PC-3 (cell line): ENCODE measurements at regions of chr6 and their contacts with region 1.

Region 1: DNA sequence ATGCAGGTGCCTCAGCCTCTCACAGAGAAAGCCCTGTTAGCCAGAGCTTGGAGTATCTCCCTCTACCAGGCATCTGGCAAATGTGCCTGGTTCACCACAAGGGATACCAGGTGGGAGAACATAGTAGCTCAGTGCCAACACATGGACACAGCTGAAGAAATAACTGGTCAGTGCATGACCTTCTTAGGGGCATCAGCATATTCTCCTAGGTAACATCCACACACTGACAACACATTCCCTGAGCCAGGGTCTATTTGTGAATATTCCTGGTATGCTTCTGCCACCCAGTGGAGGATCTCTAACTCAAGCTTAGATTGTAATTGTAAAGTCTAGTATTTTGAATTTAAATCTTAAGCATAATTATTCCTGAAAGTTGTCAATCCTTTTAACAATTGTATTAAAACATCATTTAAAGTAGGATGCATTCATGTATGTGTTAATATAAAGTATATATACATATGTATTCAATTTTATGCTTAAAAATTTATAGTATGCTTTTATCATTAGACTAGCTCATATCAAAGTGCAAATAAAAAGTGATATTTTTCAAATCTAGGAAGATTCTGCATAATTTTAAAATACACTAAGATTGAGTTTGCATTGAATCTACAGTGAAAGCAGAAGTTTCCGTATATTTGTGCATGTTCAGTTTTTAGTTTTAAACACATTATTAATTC is 45.3 kb upstream of the COL21A1 start:
- DNase-seq: peak; percentile 79
- ATAC-seq: peak; percentile 82
- H3K4me3 ChIP-seq: no peak overlapping the region
- H3K27ac ChIP-seq: no peak overlapping the region
- H3K4me1 ChIP-seq: peaks cover 9% of the 10 kb centered on the region
- H3K27me3 ChIP-seq: no peaks in the 10 kb centered on the region
- CTCF ChIP-seq: peak; percentile 87

Region 2: DNA sequence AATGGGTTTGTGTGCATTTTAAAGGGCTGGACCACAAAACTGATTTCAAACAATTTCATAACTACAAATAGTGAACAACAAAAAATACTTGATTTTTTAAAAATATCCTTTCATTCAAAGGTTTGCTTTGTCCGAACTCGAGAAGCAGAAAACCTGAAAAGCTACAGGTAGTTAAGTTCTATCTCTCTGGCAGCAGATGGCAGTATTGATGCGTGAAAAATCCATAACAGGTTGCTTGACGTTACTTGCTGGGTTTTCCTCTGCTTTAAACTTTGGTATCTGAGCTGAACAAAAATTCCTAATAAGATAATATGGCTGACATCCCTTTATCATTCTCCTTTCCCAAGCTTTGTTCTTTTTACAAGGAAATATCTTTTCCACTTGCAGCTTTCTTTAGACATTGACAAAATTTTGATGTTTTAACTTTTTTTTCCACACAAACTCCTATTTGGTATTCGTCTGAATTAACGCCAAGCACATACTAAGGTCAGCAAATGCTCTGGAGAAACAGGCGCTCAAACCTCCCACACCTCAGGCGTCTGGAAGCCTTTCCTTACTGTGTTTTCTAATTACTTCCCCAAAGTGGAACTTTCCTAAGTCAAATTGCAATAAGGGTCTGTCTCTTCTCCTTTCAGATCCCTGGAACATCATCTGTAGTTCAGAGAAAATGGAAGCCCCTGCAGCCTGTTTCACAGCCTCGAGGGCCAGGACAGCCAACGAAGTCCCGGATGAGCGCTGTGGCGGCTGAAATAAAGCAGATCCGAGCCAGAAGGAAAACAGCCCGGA is 1015.7 kb before region 1 on chr6:
- CTCF ChIA-PET with region 1: interaction called, 3 read pairs
- POLR2A ChIA-PET with region 1: no interaction called
- intact Hi-C with region 1: loop called (anchors 5 kb)
- DNase-seq: peak; percentile 73
- ATAC-seq: peak; percentile 46; the same call in 1 of the 2 replicates
- H3K4me3 ChIP-seq: no peak overlapping the region
- H3K27ac ChIP-seq: no peak overlapping the region
- H3K4me1 ChIP-seq: no peaks in the 10 kb centered on the region
- H3K27me3 ChIP-seq: peaks cover 58% of the 10 kb centered on the region
- CTCF ChIP-seq: peak; percentile 79

Region 3: GRCh38 chr6:55833284-55833683 is 459.4 kb before region 1 on chr6:
- CTCF ChIA-PET with region 1: no interaction called
- POLR2A ChIA-PET with region 1: no interaction called
- intact Hi-C with region 1: no loop called
- DNase-seq: no peak
- ATAC-seq: no peak
- H3K4me3 ChIP-seq: no peak overlapping the region
- H3K27ac ChIP-seq: no peak overlapping the region
- H3K4me1 ChIP-seq: peaks cover under 1% of the 10 kb centered on the region
- H3K27me3 ChIP-seq: no peaks in the 10 kb centered on the region
- CTCF ChIP-seq: no peak

Region 4: GRCh38 chr6:55980627-55981211 is 311.9 kb before region 1 on chr6:
- CTCF ChIA-PET with region 1: no interaction called
- POLR2A ChIA-PET with region 1: no interaction called
- intact Hi-C with region 1: loop called (anchors 1 kb)
- DNase-seq: peak; percentile 72
- ATAC-seq: no peak
- H3K4me3 ChIP-seq: no peak overlapping the region
- H3K27ac ChIP-seq: no peak overlapping the region
- H3K4me1 ChIP-seq: no peaks in the 10 kb centered on the region
- H3K27me3 ChIP-seq: no peaks in the 10 kb centered on the region
- CTCF ChIP-seq: peak; percentile 89

Region 5: DNA sequence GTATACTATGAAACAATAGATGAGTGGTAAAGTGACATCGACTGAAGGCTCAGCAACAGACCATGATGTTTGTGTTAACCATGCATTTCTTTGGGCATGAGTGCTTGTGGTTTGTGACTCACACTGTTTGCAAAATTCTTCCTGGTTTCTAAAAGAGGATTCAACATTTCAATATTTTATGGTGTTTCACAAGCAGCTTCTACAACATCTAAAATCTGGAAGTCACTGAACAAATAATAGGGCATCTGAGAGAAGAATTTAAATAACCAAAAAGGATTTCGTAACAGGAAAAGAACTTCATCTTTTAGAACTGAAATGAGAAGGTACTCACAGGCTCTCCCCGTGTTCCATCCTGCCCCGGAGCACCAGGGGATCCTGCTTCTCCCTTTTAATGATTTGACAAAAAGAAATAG is 191.5 kb before region 1 on chr6:
- CTCF ChIA-PET with region 1: no interaction called
- POLR2A ChIA-PET with region 1: no interaction called
- intact Hi-C with region 1: loop called (anchors 5 kb)
- DNase-seq: peak; percentile 95
- ATAC-seq: peak; percentile 99
- H3K4me3 ChIP-seq: no peak overlapping the region
- H3K27ac ChIP-seq: peak overlapping the region; percentile 83
- H3K4me1 ChIP-seq: peaks cover 26% of the 10 kb centered on the region
- H3K27me3 ChIP-seq: no peaks in the 10 kb centered on the region
- CTCF ChIP-seq: no peak

Region 6: GRCh38 chr6:56235245-56235644 is 57.4 kb before region 1 on chr6:
- CTCF ChIA-PET with region 1: no interaction called
- POLR2A ChIA-PET with region 1: no interaction called
- intact Hi-C with region 1: loop called (anchors 5 kb)
- DNase-seq: peak; percentile 60
- ATAC-seq: peak; percentile 82
- H3K4me3 ChIP-seq: no peak overlapping the region
- H3K27ac ChIP-seq: no peak overlapping the region
- H3K4me1 ChIP-seq: peaks cover 28% of the 10 kb centered on the region
- H3K27me3 ChIP-seq: no peaks in the 10 kb centered on the region
- CTCF ChIP-seq: no peak

Region 7: GRCh38 chr6:56359201-56359899 is 66.7 kb after region 1 on chr6:
- CTCF ChIA-PET with region 1: no interaction called
- POLR2A ChIA-PET with region 1: no interaction called
- intact Hi-C with region 1: no loop called
- DNase-seq: peak; percentile 84
- ATAC-seq: peak; percentile 68
- H3K4me3 ChIP-seq: no peak overlapping the region
- H3K27ac ChIP-seq: no peak overlapping the region
- H3K4me1 ChIP-seq: peaks cover 32% of the 10 kb centered on the region
- H3K27me3 ChIP-seq: no peaks in the 10 kb centered on the region
- CTCF ChIP-seq: peak; percentile 89

Region 8: GRCh38 chr6:56693246-56693607 is 400.6 kb after region 1 on chr6:
- CTCF ChIA-PET with region 1: no interaction called
- POLR2A ChIA-PET with region 1: no interaction called
- intact Hi-C with region 1: no loop called
- DNase-seq: peak; percentile 89
- ATAC-seq: peak; percentile 47
- H3K4me3 ChIP-seq: peak overlapping the region; percentile 48; the same call in 1 of the 2 replicates
- H3K27ac ChIP-seq: peak overlapping the region; percentile 84
- H3K4me1 ChIP-seq: peaks cover 73% of the 10 kb centered on the region
- H3K27me3 ChIP-seq: no peaks in the 10 kb centered on the region
- CTCF ChIP-seq: no peak